Posterior cingulate gyrus (tissue), 11 donors: ENCODE measurements at regions of chr7 and their contacts with region 1.

Region 1: DNA sequence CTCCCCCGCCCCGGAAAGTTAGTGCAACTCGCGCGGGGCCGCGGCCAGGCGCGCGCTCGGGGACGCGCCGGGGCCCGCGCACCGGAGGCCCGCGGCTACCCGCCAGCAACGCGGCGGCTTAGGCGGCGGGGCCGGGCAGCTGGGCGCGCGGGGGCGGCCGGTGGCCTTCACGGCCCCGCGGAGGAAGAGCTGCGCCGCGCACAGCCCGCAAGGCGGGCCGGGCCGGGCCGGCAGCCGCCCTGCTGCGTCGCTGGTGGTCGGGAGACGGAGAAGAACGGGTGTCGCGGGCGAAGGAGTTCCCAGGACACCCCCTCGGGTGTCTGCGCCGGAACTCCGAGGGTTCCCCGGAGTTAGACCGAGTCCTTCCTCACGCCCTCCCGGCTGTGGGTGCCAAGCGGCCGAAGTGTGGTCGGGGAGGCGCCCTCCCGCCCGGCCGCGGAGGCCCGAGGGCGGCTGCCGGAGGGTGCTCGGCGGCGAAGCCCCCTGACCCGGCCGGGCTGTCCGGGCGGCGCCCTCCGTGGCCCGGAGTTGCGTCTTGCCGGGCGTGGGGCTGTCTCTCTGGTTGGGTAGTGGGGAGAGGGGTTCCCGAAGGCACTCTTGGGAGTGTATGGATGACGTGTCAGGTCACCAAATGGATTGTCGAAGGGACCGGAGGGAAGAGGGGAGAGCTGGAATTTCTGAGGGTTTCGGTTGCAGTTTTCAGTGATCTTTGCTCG is 584 bp downstream of the ST7 start:
- DNase-seq: peak; percentile 14 to 91 (median 40)

Region 2: GRCh38 chr7:116862234-116862950 is 91.5 kb before region 1 on chr7 and contains the start of gene CAPZA2:
- intact Hi-C with region 1: loop called (anchors 10 kb)
- DNase-seq: peak; percentile 82 to 99 (median 88)

Region 3: GRCh38 chr7:117312598-117313580 is 359.0 kb after region 1 on chr7:
- intact Hi-C with region 1: no loop called
- DNase-seq: no peak